Activated CD8-positive, alpha-beta memory T cell treated with anti-CD3 and anti-CD28 coated beads, Interleukin-2, amount 10 ng/mL, durations not matched to agents 7 days and 5 days (primary cell): ENCODE measurements at regions of chr15 and their contacts with region 1.

Region 1: DNA sequence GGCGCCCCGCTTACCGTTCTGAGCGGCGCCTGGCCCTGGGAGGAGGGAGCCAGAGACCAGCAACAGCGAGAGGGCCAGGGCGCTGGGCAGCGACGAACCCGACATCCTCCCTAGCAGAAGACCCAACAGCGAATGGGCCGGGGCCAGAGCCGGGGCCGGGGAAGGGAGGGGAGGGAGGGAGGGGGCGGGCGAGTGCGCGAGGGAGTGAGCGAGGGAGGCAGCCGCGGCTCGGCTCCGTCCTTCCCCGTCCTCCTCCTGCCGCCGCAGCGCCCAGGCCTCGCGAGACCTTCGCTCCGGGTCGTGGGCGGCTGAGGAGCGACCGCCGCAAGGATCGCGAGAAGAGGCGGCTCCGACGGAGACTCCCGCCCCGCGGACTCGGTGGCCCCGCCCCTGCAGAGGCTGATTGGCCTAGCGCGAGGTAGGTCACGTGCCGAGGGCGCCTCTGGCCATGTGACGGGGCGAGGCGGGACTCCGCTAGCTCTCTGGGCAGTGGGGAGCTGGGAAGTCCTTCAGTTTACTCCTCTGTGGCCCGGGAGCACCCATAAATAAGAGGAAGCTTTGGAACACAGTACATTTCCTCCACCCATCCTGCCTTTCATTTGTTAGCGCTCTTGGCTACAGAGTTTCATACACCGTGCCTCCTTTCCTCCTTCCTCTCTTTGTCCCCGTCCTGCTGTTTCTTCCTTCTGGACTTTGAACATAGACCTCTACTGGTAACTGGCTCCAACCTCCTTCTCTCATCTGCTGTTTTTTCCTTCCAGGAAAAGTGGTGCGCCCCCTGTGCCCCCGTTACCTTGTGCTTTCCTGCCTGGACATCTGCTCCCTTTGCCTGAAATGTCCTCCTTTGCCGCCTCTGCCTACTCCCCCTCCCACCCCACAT is at the start of gene NPTN:
- DNase-seq: peak; percentile 99
- ATAC-seq: peak; percentile 97
- H3K4me3 Mint-ChIP-seq: peak within 1 kb of the TSS; percentile 74
- H3K27ac Mint-ChIP-seq: peak within 1 kb of the TSS; percentile 70
- H3K4me1 Mint-ChIP-seq: peaks cover 48% of the 10 kb centered on the region
- H3K27me3 Mint-ChIP-seq: peaks cover 27% of the 10 kb centered on the region
- total RNA-seq, gene NPTN: 45.5 to 54.0 TPM

Region 2: GRCh38 chr15:73240866-73241499 is 392.4 kb before region 1 on chr15:
- CTCF ChIA-PET with region 1: interaction called, 10 read pairs
- DNase-seq: peak; percentile 85
- ATAC-seq: no peak
- H3K4me3 Mint-ChIP-seq: no peak overlapping the region
- H3K27ac Mint-ChIP-seq: no peak overlapping the region
- H3K4me1 Mint-ChIP-seq: peaks cover 13% of the 10 kb centered on the region
- H3K27me3 Mint-ChIP-seq: peaks cover 7% of the 10 kb centered on the region

Region 3: DNA sequence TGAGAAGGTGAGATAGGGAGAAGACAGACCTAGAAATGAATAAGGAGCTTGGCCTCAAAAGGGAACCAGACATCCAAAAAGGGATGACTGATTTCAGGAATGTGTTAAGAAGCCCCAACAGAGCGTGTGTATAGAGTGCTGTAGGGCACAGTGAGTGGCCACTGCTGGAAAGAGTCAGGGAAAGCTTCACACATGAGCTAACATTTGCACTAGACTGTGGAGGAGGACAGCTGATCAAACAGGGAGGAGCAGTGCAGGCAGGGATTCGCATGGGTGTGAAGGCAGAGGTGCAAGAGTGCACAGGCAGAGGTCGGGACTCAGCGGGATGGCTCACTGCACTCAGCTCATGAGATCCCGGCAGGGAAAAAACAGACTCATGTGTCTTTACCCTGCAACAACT is 62.0 kb before region 1 on chr15:
- CTCF ChIA-PET with region 1: interaction called, 39 read pairs
- DNase-seq: no peak
- ATAC-seq: peak; percentile 43
- H3K4me3 Mint-ChIP-seq: no peak overlapping the region
- H3K27ac Mint-ChIP-seq: peak overlapping the region; percentile 39
- H3K4me1 Mint-ChIP-seq: peaks cover 64% of the 10 kb centered on the region
- H3K27me3 Mint-ChIP-seq: no peaks in the 10 kb centered on the region

Region 4: DNA sequence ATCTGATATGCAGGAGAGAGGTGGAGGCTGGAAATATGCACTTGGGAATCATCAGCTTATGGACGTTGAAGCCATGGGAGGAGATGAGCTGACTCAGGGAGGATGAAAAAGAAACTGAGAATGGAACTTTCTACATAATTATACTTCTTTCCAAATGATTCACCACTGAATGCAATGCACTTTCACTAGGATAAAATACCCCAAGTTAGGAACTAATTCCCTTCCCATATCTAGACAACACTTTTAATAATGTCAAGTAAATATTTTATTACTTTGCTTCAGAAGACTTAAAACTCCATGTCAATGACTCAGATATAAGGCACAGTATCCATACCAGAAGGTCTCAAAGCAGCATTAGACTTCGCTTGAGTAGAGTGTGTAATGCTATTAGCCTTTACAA is 24.4 kb before region 1 on chr15:
- CTCF ChIA-PET with region 1: interaction called, 45 read pairs
- DNase-seq: no peak
- ATAC-seq: no peak
- H3K4me3 Mint-ChIP-seq: no peak overlapping the region
- H3K27ac Mint-ChIP-seq: no peak overlapping the region
- H3K4me1 Mint-ChIP-seq: peaks cover 38% of the 10 kb centered on the region
- H3K27me3 Mint-ChIP-seq: no peaks in the 10 kb centered on the region

Region 5: GRCh38 chr15:73660455-73660854 is 27.1 kb after region 1 on chr15:
- CTCF ChIA-PET with region 1: interaction called, 10 read pairs
- DNase-seq: no peak
- ATAC-seq: no peak
- H3K4me3 Mint-ChIP-seq: no peak overlapping the region
- H3K27ac Mint-ChIP-seq: no peak overlapping the region
- H3K4me1 Mint-ChIP-seq: peaks cover 4% of the 10 kb centered on the region
- H3K27me3 Mint-ChIP-seq: peaks cover 48% of the 10 kb centered on the region

Region 6: GRCh38 chr15:73697033-73697467 is 63.7 kb after region 1 on chr15:
- CTCF ChIA-PET with region 1: interaction called, 233 read pairs
- DNase-seq: peak; percentile 96
- ATAC-seq: peak; percentile 90
- H3K4me3 Mint-ChIP-seq: peak overlapping the region; percentile 14
- H3K27ac Mint-ChIP-seq: peak overlapping the region; percentile 38
- H3K4me1 Mint-ChIP-seq: peaks cover 48% of the 10 kb centered on the region
- H3K27me3 Mint-ChIP-seq: peaks cover 72% of the 10 kb centered on the region